ENCODE measurements at regions of chrX and their contacts with region 1.

Region 1: DNA sequence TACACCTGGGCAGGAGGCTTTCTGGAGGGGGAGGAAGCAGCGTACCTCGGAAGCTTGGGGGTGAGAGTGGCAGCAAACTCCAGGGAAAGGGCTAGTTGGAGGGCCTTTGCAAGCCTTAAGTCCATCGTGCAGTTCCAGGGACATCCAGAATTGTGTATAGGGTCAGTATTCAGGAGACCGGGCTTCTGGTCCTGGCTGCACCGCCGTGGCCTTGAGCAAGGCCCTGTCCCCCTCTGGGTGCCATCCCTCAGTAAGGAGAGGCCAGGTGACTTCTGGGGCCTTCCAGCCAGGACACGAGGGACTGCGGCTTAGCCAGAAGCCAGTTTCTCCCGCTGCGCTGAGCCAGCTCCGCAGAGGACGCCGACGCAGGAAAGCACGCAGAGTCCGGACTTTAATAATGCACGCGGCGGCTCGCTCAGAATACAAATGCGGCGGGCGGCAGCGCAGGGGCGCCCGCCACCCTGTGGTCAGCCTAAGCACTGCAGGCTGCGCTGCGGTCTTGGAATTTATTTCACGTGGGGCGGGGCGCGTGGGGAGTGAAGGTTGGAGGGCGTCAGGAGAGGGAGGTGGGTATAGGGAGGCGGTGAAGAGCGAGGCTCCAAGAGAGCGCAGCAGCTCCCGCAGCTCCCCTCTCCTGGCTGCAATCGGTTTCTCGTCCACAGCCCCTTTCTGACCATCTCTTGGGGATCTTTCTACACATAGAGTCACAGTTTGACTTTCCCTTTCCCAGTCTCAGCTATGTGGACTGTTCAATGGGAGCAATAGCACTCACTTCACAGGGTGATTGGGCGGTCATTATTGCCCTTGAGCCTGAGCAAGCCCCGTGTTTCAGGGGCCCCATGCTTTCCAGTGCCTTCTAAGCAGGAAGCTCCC is 94.1 kb upstream of the GPR50 start:
- DNase-seq: peak; percentile 59
- H3K27ac ChIP-seq: no peak overlapping the region
- CTCF ChIP-seq: peak; percentile 88

Region 2: GRCh38 chrX:150772150-150772970 is 310.0 kb before region 1 on chrX:
- CTCF ChIA-PET with region 1: interaction called, 49 read pairs
- POLR2A ChIA-PET with region 1: no interaction called
- DNase-seq: peak; percentile 63
- H3K27ac ChIP-seq: no peak overlapping the region
- CTCF ChIP-seq: peak; percentile 72

Region 3: GRCh38 chrX:151009582-151009981 is 72.7 kb before region 1 on chrX:
- CTCF ChIA-PET with region 1: no interaction called
- POLR2A ChIA-PET with region 1: no interaction called
- DNase-seq: no peak
- H3K27ac ChIP-seq: no peak overlapping the region
- CTCF ChIP-seq: no peak

Measured in RWPE1 (cell line).